Heart left ventricle (tissue), 16 donors: ENCODE measurements at regions of chr11 and their contacts with region 1.

Region 1: DNA sequence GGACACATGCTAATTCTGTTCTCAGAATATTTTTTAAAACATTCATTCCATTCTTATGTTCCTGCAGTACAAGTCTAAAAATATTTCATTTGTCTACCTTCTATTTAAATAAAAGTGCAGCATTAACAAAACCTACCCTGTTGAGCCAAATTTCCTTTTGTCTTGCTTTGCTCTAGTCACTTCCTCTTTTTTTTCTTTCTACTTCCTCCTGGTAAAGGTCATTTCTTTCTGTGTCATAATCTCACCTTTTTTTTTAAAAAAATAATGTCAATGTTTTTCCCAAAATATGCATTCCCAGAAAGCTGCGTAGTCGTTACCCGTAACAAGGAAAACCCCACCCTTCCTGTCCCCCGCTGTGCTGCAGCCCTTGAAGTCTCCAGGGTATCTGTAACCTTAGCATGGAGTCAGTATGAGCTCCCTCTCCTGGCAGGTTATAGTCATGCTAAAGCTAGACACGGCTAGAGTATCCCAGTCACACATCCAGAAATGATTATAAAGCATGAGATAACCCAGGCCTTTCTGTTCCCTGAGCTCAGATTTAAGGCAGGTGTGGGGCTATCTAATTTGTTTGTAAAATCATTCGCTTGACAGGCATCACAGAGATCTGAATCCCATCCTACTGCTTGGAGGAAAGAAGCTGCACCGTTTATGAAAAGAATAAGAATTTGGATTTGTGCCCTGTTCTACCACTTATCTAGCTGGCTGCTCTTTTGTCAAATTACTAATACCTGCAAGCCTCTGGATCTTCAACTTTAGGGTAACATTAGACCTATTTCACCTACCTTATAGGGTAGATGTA is 51.1 kb upstream of the EED start:
- DNase-seq: peak; percentile 72 to 88 (median 84)
- ATAC-seq: peak; percentile 97 to 99 (median 99)
- H3K4me3 ChIP-seq: peak overlapping the region in 9 of 12 donors; percentile 24 to 45 (median 38)
- H3K27ac ChIP-seq: peak overlapping the region; percentile 11 to 88 (median 68)
- H3K4me1 ChIP-seq: peaks cover 0 to 65% (median 14%) of the 10 kb centered on the region in 12 donors
- H3K27me3 ChIP-seq: no peaks in the 10 kb centered on the region
- CTCF ChIP-seq: peak; percentile 60 to 89 (median 79)
- POLR2A ChIP-seq: no peak

Region 2: DNA sequence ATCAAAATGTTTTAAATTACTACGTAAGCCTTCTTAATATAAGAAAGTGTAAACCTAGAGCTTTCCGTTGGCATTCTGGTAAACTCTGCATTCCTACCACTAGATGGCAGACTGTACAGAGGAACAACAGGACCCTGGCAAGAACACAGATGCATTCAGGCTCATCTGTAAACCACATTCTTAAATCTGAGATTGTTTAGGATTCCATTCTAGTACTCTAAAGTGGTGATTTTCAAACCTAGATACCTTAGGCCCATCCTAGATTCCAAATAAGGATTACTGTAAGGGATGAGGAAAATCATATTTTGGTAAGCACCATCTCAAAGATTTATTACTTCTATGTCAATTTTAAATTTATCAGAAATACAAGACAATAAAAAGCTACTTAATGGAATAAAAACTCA is 151.5 kb before region 1 on chr11:
- intact Hi-C with region 1: loop called (anchors 1 to 5 kb)
- DNase-seq: peak in 3 of 5 donors; percentile 32 to 79 (median 78)
- ATAC-seq: peak; percentile 80 to 91 (median 84)
- H3K4me3 ChIP-seq: peak overlapping the region in 8 of 12 donors; percentile 16 to 46 (median 26)
- H3K27ac ChIP-seq: peak overlapping the region in 10 of 12 donors; percentile 13 to 75 (median 58)
- H3K4me1 ChIP-seq: peaks cover 0 to 81% (median 57%) of the 10 kb centered on the region in 12 donors
- H3K27me3 ChIP-seq: no peaks in the 10 kb centered on the region
- CTCF ChIP-seq: peak; percentile 82 to 94 (median 89)
- POLR2A ChIP-seq: no peak

Region 3: GRCh38 chr11:86151174-86152005 is 42.1 kb before region 1 on chr11:
- intact Hi-C with region 1: no loop called
- DNase-seq: peak; percentile 38 to 72 (median 39)
- ATAC-seq: peak; percentile 47 to 73 (median 67)
- H3K4me3 ChIP-seq: no peak overlapping the region
- H3K27ac ChIP-seq: peak overlapping the region in 11 of 12 donors; percentile 0 to 70 (median 44)
- H3K4me1 ChIP-seq: peaks cover 0 to 37% (median 23%) of the 10 kb centered on the region in 12 donors
- H3K27me3 ChIP-seq: no peaks in the 10 kb centered on the region
- CTCF ChIP-seq: no peak
- POLR2A ChIP-seq: no peak

Region 4: DNA sequence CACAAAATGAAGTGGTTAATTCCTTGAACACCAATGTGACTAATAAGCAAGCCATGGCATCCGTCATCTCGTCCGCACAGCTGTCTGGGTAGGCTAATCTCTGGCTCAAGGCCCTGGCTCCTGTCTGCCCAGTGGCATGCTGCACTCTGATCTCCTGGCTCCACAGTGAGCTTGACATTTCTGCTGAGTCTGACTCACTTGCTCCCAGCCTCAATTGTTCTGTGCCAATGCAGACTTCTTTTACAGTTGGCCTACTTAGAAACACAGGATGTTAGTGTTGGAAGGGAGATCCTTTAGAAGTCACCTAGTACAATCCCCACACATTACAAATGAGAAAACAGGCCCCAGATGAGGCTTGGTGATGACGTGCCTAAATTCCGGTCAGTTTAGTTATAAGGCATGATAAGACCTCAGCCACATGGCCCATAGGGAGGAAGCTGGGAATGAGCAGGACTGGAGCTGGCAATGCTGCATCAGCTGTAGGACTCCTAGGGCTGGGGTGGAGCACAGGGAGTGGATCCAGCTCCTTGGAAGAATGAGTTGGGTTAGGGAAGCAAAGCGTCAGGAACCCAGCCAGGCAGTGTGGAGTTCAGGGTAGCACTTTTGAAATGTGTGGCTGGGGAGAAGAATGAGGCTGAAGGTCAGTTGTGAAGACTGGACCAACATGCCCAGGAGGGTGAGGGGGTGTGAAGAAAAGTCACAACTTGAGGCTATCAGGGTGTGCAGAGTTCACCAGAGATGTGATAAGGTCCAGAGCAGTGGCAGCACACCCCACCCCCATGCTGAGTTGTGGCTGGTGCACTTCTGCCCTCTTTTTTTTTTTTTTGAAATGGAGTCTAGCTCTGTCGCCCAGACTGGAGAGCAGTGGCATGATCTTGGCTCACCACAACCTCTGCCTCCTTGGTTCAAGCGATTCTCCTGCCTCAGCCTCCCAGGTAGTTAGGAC is 19.1 kb before region 1 on chr11:
- intact Hi-C with region 1: loop called in 2 of 10 experiments (anchors 1 to 2 kb)
- DNase-seq: peak; percentile 81 to 95 (median 86)
- ATAC-seq: peak; percentile 91 to 96 (median 95)
- H3K4me3 ChIP-seq: no peak overlapping the region
- H3K27ac ChIP-seq: peak overlapping the region; percentile 23 to 89 (median 76)
- H3K4me1 ChIP-seq: peaks cover 6 to 78% (median 45%) of the 10 kb centered on the region in 12 donors
- H3K27me3 ChIP-seq: no peaks in the 10 kb centered on the region
- CTCF ChIP-seq: no peak
- POLR2A ChIP-seq: peak in 1 of 2 donors; percentile 31

Region 5: GRCh38 chr11:86395061-86395551 is 201.6 kb after region 1 on chr11:
- intact Hi-C with region 1: no loop called
- DNase-seq: peak in 2 of 5 donors; percentile 10 to 36
- ATAC-seq: peak in 3 of 4 donors; percentile 53 to 67 (median 60)
- H3K4me3 ChIP-seq: no peak overlapping the region
- H3K27ac ChIP-seq: no peak overlapping the region
- H3K4me1 ChIP-seq: peaks cover 0 to 10% (median 0%) of the 10 kb centered on the region in 12 donors
- H3K27me3 ChIP-seq: no peaks in the 10 kb centered on the region
- CTCF ChIP-seq: no peak
- POLR2A ChIP-seq: no peak

Region 6: GRCh38 chr11:86442420-86442819 is 248.9 kb after region 1 on chr11:
- intact Hi-C with region 1: no loop called
- DNase-seq: no peak
- ATAC-seq: peak in 1 of 4 donors; percentile 46
- H3K4me3 ChIP-seq: no peak overlapping the region
- H3K27ac ChIP-seq: peak overlapping the region in 4 of 12 donors; percentile 20 to 52 (median 26)
- H3K4me1 ChIP-seq: peaks cover 0 to 28% (median 0%) of the 10 kb centered on the region in 12 donors
- H3K27me3 ChIP-seq: no peaks in the 10 kb centered on the region
- CTCF ChIP-seq: no peak
- POLR2A ChIP-seq: no peak

Region 7: DNA sequence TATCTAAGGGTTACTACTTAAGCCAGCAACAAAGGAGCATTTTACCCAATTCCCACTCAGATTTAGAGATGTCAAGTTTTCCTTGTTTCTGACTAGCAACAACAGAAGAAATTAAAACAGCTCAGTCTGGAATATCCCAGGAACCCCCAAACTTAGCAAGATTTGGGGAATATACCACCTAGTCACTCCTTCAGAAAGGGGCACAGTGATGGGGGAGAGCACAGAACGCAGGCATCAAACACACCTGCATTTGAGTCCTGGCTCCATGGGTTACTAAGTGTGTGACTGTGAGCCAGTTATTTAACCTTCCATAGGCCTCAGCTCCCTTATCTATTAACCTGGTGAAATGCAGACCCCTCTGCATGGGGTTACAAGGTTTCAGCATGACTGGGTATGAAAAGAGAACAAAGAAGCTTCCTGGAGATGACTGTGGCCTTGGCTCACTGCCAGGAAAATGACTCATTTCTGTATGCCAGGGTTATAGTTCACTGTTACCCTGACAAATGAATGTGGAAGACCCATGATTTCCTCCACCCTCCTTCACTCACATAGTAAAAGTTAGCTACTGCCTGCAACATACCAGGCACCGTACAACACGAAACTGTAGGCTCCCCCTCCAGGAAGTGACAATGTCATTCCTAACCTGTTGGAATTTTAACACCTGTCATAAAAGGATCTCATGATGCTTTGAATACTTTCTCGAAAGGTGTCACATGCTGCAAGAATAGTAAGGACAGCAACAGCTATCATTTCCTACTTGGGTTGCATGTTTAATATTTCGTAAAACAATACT is 399.4 kb after region 1 on chr11:
- intact Hi-C with region 1: no loop called
- DNase-seq: peak in 4 of 5 donors; percentile 43 to 62 (median 48)
- ATAC-seq: peak; percentile 40 to 71 (median 57)
- H3K4me3 ChIP-seq: no peak overlapping the region
- H3K27ac ChIP-seq: peak overlapping the region in 2 of 12 donors; percentile 10 to 54
- H3K4me1 ChIP-seq: peaks cover 0 to 49% (median 32%) of the 10 kb centered on the region in 12 donors
- H3K27me3 ChIP-seq: no peaks in the 10 kb centered on the region
- CTCF ChIP-seq: no peak
- POLR2A ChIP-seq: no peak